Activated CD8-positive, alpha-beta T cell treated with anti-CD3 and anti-CD28 coated beads for 36 hours (primary cell): ENCODE measurements at regions of chr11 and their contacts with region 1.

Region 1: GRCh38 chr11:95089620-95090542 is at the start of gene ENDOD1:
- DNase-seq: peak; percentile 82
- ATAC-seq: peak; percentile 93
- H3K4me3 Mint-ChIP-seq: peak within 1 kb of the TSS; percentile 90
- H3K27ac Mint-ChIP-seq: peak within 1 kb of the TSS; percentile 95
- H3K4me1 Mint-ChIP-seq: peaks cover 65% of the 10 kb centered on the region
- H3K27me3 Mint-ChIP-seq: no peaks in the 10 kb centered on the region
- CTCF ChIP-seq: peak; percentile 16
- total RNA-seq, gene ENDOD1: 13.0 to 14.1 TPM

Region 2: DNA sequence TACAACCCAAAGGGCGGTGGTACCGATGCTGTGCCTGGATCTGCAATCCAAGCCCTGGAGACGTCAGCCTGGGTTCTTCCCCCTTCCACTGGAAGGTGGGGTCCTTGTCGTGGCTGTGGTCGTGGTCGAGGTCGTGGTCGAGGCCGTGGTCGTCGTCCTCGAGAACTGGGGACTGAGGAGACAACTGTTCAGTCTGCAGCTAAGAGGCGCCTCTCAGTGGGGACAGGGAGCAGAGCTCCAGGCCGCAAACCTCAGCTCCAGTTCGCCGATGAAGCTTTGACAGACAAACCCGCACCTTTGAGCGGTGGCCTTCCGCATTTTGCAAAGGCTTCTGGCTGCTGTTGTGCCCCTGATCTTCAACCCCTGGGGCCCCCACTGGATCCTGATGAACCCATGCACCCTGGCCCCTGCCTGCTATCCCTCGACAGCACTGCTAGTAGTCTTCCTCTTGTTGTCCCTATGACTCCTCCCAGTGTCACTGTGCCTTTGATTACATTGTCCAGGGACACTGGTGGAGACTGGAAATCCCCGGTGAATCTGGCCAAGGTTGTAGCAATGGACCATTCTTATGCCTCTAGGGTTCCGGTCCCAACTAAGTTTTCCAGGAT is 39.2 kb before region 1 on chr11:
- CTCF ChIA-PET with region 1: no interaction called
- POLR2A ChIA-PET with region 1: no interaction called
- intact Hi-C with region 1: no loop called
- DNase-seq: no peak
- ATAC-seq: no peak
- H3K4me3 Mint-ChIP-seq: no peak overlapping the region
- H3K27ac Mint-ChIP-seq: no peak overlapping the region
- H3K4me1 Mint-ChIP-seq: no peaks in the 10 kb centered on the region
- H3K27me3 Mint-ChIP-seq: peaks cover 21% of the 10 kb centered on the region
- CTCF ChIP-seq: no peak

Region 3: GRCh38 chr11:95138448-95138847 is 48.6 kb after region 1 on chr11:
- CTCF ChIA-PET with region 1: interaction called, 3 read pairs
- POLR2A ChIA-PET with region 1: interaction called, 3 read pairs
- intact Hi-C with region 1: loop called (anchors 5 kb)
- DNase-seq: no peak
- ATAC-seq: peak; percentile 80
- H3K4me3 Mint-ChIP-seq: no peak overlapping the region
- H3K27ac Mint-ChIP-seq: no peak overlapping the region
- H3K4me1 Mint-ChIP-seq: peaks cover 15% of the 10 kb centered on the region
- H3K27me3 Mint-ChIP-seq: peaks cover 5% of the 10 kb centered on the region
- CTCF ChIP-seq: peak; percentile 45

Region 4: DNA sequence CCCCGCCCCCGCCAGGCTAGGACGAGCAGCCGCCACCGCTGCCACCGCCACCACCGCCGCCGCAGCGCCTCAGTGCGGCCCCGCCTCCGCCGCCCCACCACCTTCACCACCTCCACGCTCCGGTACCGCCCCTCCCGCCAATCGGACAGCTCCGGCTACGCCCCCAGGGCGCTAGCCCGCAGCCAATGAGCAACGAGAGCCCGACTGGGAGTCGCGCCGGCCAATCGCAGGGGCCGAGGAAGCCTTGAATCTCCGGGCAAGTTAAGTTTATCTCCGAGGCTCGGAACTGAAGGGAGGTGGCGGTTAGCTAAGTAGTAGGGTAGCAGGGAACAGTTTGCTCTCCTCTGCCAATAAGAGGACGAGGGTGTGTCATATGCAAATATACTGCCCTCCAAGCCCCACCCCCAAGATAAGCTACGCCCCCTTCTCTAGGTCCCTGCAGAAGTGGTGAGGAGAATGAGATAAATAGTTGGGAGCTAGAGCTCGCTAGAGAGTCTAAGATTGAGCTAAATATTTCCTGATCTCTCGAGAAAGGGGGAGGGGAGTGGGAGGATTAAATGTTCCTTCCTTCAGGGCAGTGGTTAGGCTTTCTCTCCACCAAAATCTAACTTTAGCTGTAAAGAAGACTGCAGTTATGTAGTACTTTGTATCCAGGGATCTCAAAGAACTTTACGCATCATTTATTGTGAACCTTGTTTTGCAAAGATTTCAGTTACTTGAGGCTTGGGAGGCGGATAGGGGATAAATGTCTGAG is 141.4 kb after region 1 on chr11 and contains the start of gene SESN3:
- CTCF ChIA-PET with region 1: no interaction called
- POLR2A ChIA-PET with region 1: no interaction called
- intact Hi-C with region 1: loop called (anchors 5 kb)
- DNase-seq: peak; percentile 98
- ATAC-seq: peak; percentile 93
- H3K4me3 Mint-ChIP-seq: peak within 1 kb of the TSS; percentile 92
- H3K27ac Mint-ChIP-seq: peak within 1 kb of the TSS; percentile 78
- H3K4me1 Mint-ChIP-seq: peaks cover 39% of the 10 kb centered on the region
- H3K27me3 Mint-ChIP-seq: no peaks in the 10 kb centered on the region
- CTCF ChIP-seq: no peak
- total RNA-seq, gene SESN3: 19.4 to 19.5 TPM